ENCODE measurements at regions of chr6 and their contacts with region 1.

Region 1: DNA sequence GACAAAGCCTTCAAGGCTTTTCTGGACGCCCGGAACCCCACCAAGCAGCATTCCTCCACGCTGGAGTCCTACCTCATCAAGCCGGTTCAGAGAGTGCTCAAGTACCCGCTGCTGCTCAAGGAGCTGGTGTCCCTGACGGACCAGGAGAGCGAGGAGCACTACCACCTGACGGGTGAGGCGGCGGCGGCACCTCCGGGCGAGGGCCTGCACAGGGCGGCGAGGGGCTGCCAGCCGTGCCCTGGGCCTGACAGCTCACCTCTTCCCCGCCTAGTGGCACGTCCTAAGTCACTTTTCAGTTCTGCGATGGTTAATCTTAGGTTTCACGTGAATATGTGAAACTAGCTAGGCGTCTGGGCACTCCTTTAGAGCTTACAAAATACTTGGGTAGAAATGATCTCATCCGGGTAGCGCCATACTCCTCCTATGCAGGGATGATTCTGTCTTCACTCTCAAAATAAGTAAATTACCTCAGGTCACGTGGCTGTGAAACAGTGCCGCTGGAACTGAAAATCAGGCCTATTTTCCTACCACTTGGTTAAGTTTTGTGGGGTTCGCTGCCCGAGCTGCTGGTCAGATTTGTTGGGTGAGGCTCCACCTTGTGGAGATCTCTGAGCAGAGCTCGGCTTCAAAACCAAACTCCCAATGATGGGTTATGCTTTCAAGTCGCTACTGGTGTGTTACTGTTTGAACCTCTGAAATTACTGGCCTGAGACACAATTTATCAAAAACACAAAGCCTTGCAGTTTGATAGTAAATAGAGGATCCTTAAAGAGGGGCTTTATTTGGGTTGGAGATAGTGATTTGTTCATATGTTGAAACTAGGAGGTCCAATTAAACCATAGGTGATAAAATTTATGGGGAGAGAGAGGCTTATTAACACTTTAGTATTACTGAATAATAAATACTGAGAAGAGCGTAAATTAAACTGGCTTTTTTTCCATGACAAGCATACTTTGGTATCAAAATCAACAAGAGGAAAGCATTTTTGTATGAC is 15.5 kb upstream of the CLDN20 start:
- DNase-seq: peak; percentile 75
- H3K4me3 ChIP-seq: no peak overlapping the region
- H3K27ac ChIP-seq: no peak overlapping the region
- H3K4me1 ChIP-seq: no peaks in the 10 kb centered on the region
- H3K27me3 ChIP-seq: no peaks in the 10 kb centered on the region
- CTCF ChIP-seq: peak; percentile 71 to 74
- POLR2A ChIP-seq: no peak

Region 2: GRCh38 chr6:154928325-154928922 is 319.9 kb before region 1 on chr6:
- CTCF ChIA-PET with region 1: interaction called, 34 read pairs
- POLR2A ChIA-PET with region 1: no interaction called
- dilution Hi-C with region 1: no loop called
- intact Hi-C with region 1: loop called (anchors 1 kb)
- DNase-seq: peak; percentile 76
- H3K4me3 ChIP-seq: no peak overlapping the region
- H3K27ac ChIP-seq: no peak overlapping the region
- H3K4me1 ChIP-seq: peaks cover 13% of the 10 kb centered on the region
- H3K27me3 ChIP-seq: no peaks in the 10 kb centered on the region
- CTCF ChIP-seq: peak; percentile 65 to 73
- POLR2A ChIP-seq: no peak

Region 3: GRCh38 chr6:155183095-155183494 is 65.2 kb before region 1 on chr6:
- CTCF ChIA-PET with region 1: interaction called, 292 read pairs
- POLR2A ChIA-PET with region 1: no interaction called
- dilution Hi-C with region 1: no loop called
- intact Hi-C with region 1: no loop called
- DNase-seq: peak; percentile 21
- H3K4me3 ChIP-seq: no peak overlapping the region
- H3K27ac ChIP-seq: no peak overlapping the region
- H3K4me1 ChIP-seq: peaks cover 21% of the 10 kb centered on the region
- H3K27me3 ChIP-seq: no peaks in the 10 kb centered on the region
- CTCF ChIP-seq: no peak
- POLR2A ChIP-seq: no peak

Region 4: DNA sequence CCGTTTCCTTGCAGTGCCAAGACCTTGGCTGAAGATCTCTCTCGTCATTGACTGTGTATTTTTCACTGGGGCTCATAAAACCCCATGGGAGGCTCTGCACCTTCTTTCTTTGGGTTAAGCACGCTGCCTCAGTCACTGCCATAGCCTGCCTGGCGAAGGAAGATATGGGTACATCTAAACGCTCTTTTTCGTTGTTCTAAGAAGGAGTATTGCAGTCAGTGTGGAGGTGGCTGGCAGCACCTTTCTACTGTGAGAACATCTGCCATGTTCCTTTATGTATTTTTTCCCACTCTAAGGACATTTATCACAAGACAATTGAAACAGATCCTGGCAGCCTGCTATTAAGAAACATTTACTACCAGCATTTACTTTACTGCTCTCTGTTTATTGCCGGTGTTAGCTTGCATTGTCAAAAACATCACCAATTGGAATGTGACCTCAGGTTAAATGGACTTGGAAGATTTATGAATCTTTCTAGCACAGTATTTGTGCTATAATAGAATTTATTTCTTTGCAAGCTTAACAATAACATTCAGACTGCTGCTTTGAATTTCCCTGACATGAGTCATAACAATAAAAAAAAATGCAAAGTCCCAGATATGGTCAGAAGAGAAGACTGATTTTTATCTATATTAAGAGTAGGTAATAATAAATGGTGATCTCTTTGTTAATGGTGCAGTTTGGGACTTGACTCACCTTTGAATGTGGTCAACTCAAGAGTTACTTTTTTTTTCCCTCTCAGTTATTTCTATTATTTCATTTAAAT is 46.7 kb before region 1 on chr6:
- CTCF ChIA-PET with region 1: interaction called, 11 read pairs
- POLR2A ChIA-PET with region 1: no interaction called
- dilution Hi-C with region 1: no loop called
- intact Hi-C with region 1: loop called (anchors 1 kb)
- DNase-seq: peak; percentile 96
- H3K4me3 ChIP-seq: no peak overlapping the region
- H3K27ac ChIP-seq: peak overlapping the region; percentile 96
- H3K4me1 ChIP-seq: peaks cover 24% of the 10 kb centered on the region
- H3K27me3 ChIP-seq: no peaks in the 10 kb centered on the region
- CTCF ChIP-seq: no peak
- POLR2A ChIP-seq: no peak

Region 5: GRCh38 chr6:155273431-155273830 is 25.1 kb after region 1 on chr6:
- CTCF ChIA-PET with region 1: interaction called, 21 read pairs
- POLR2A ChIA-PET with region 1: no interaction called
- dilution Hi-C with region 1: no loop called
- intact Hi-C with region 1: no loop called
- DNase-seq: peak; percentile 88
- H3K4me3 ChIP-seq: no peak overlapping the region
- H3K27ac ChIP-seq: peak overlapping the region; percentile 97
- H3K4me1 ChIP-seq: peaks cover 41% of the 10 kb centered on the region
- H3K27me3 ChIP-seq: no peaks in the 10 kb centered on the region
- CTCF ChIP-seq: no peak
- POLR2A ChIP-seq: no peak

Measured in endothelial cell of umbilical vein (primary cell).